Posterior cingulate gyrus (tissue), 11 donors: ENCODE measurements at regions of chr7 and their contacts with region 1.

Region 1: DNA sequence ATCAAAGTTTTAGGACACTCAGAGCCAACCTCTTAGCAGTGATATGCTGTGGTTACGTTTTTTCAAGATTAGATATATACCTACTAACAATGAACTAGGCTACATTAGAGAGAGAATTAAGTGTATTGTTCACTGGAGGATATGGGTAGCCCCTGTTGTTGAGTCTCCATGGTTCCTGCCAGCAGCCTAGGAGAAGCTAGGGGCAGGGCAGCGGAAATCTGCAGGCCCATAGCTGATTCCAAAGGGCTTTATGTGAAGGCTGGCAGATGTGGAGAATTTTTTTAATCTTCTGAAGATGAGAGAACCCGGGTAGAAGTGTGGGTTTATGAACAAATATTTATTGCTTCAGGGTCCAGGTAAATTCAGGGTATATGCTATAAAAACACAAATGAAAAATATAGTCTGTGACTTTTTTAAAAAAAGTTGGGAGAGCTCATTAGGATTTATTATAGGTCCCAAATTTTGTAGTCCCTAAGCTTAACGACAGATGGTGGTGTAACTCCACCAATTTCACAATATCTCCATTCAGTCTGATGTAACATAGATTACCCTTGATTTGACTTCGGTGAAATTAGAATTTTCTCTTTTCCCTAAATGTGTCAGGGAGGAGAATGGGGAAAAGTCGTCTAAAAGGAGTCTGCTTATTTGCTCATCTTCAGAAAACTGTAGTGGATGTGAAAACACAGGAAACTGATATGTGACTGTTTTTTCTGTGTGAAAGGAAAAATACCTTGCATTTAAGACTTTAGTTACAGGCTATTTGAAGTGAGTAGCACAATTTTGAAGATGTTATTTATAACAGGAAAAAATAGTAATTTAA is 163.0 kb upstream of the PPP1R3A start:
- DNase-seq: no peak

Region 2: DNA sequence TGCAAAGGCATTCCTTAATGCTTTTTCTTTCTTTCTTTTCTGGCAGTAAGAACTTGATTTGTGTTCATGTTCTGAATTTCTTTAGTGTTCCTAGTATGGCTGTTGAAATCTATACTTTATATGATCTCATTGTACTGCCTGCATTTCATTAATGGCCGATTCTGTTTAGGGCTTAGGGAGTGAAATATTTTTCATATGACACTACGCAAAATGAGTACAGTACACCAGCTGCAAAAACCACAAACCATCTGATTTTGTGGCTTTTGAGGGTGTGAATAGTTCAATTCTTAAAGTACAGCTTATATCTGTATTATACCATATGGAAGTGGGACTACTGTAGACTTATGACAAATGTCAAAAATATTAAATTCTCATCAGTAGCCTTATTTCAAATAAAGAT is 263.7 kb after region 1 on chr7:
- intact Hi-C with region 1: no loop called
- DNase-seq: no peak

Region 3: GRCh38 chr7:114663502-114663901 is 581.7 kb after region 1 on chr7:
- intact Hi-C with region 1: loop called (anchors 5 kb)
- DNase-seq: no peak

Region 4: DNA sequence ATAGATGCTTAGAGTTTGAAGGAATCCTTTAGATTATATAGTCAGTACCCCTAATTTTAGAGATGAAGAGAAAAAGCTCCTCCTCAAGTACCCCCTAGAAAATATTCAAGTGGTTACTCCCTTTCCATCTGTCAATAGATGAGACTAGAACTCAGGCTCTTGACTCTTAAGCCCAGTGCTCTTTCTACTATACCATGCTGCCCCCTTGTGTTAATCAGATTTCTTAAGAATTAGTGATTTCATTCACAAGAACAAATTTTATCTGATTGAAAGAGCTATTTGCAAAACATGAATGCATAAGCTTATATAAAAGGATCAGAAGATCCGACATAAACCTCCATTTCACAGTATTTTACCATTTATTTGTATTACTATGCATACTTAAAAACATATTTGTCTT is 1769.5 kb after region 1 on chr7:
- intact Hi-C with region 1: loop called (anchors 5 kb)
- DNase-seq: no peak

Region 5: GRCh38 chr7:115910541-115911164 is 1828.8 kb after region 1 on chr7:
- intact Hi-C with region 1: loop called (anchors 5 kb)
- DNase-seq: no peak